ENCODE measurements at regions of chr9 and their contacts with region 1.

Region 1: GRCh38 chr9:97954550-97954989 is 16.6 kb upstream of the HEMGN start:
- DNase-seq: peak; percentile 73
- ATAC-seq: peak; percentile 93
- H3K4me3 Mint-ChIP-seq: no peak overlapping the region
- H3K27ac Mint-ChIP-seq: no peak overlapping the region
- H3K4me1 Mint-ChIP-seq: peaks cover 7% of the 10 kb centered on the region
- H3K27me3 Mint-ChIP-seq: no peaks in the 10 kb centered on the region
- CTCF ChIP-seq: peak; percentile 78

Region 2: GRCh38 chr9:97890038-97890437 is 64.5 kb before region 1 on chr9:
- CTCF ChIA-PET with region 1: interaction called, 11 read pairs
- POLR2A ChIA-PET with region 1: no interaction called
- intact Hi-C with region 1: no loop called
- DNase-seq: peak; percentile 82
- ATAC-seq: peak; percentile 87
- H3K4me3 Mint-ChIP-seq: no peak overlapping the region
- H3K27ac Mint-ChIP-seq: no peak overlapping the region
- H3K4me1 Mint-ChIP-seq: peaks cover 5% of the 10 kb centered on the region
- H3K27me3 Mint-ChIP-seq: no peaks in the 10 kb centered on the region
- CTCF ChIP-seq: peak; percentile 95

Region 3: DNA sequence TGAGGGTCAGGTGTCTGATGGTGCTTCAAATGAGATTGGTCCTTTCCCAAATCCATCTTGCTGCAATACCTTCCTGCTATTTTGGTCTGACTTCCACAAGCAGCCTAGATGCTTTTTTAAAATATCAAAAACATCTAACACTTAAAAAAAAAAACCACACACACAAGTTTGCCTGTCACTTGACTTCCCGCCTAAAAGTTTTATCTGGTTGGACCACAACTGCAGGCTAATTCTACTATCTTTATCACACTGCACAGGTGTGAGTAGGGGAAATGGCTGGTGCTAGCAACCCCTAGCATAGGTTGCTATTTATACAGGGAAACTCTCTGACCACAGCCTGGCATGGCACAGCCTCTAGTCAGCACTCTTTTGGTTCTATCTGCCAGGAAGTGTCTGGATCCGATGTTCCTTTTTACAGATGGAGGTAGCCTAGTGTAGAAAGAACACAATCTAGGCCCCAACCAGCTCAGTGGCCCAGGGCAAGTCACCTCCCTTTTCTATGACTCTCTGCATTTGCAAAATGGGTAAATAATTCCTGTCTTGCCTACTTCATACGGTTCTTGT is 16.4 kb before region 1 on chr9 and contains the start of gene HEMGN:
- CTCF ChIA-PET with region 1: interaction called, 23 read pairs
- POLR2A ChIA-PET with region 1: interaction called, 4 read pairs
- intact Hi-C with region 1: no loop called
- DNase-seq: peak; percentile 53
- ATAC-seq: peak; percentile 81
- H3K4me3 Mint-ChIP-seq: peak within 1 kb of the TSS; percentile 46
- H3K27ac Mint-ChIP-seq: peak within 1 kb of the TSS; percentile 83
- H3K4me1 Mint-ChIP-seq: peaks cover 34% of the 10 kb centered on the region
- H3K27me3 Mint-ChIP-seq: no peaks in the 10 kb centered on the region
- CTCF ChIP-seq: no peak
- total RNA-seq, gene HEMGN: 1.2 to 1.4 TPM

Region 4: DNA sequence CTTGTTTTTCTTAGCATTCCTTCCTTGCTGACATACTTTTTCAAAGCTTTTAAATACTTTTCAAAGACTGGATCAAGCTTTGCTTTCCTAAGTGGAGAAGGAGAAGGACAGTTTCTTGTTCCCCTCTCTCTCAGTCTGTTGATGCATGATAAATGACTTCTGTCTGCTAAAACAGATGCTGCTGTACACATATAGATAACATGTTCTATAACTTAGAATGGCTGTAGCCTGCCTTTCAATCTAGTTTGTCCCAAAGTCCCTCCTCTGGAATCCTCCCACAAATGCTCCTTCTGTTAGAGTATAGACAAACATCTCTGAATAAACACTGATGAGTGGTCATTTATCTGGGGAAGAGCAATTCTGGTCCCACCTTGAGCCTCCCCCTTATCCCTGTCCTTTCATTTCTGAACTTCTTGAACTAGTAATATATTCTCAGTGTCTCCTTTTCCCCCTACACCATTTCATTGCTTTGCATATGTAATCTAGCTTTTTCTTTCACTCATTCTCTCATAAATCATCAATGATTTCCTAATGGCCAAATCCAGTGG is 11.2 kb before region 1 on chr9:
- CTCF ChIA-PET with region 1: interaction called, 23 read pairs
- POLR2A ChIA-PET with region 1: interaction called, 4 read pairs
- intact Hi-C with region 1: no loop called
- DNase-seq: no peak
- ATAC-seq: no peak
- H3K4me3 Mint-ChIP-seq: no peak overlapping the region
- H3K27ac Mint-ChIP-seq: no peak overlapping the region
- H3K4me1 Mint-ChIP-seq: peaks cover 5% of the 10 kb centered on the region
- H3K27me3 Mint-ChIP-seq: no peaks in the 10 kb centered on the region
- CTCF ChIP-seq: no peak

Region 5: DNA sequence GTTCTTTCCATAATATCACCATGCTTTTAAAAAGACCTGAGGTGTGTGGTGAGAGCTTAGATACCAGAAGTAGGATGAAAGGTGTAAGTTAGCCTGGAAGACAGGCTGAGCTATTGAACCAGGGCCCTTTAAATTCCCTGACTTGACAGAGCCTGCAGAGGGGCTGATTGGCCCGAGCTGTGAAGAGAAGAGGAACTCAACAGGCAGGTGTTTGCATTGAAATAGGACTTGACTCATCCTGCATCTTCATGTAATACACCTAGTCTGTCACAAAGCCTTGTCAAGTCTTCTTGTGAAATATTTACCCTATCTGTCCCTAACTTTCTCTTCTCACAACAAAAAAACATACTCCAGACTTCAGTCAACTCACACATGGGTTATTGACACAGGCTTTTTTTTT is 11.9 kb after region 1 on chr9:
- CTCF ChIA-PET with region 1: interaction called, 29 read pairs
- POLR2A ChIA-PET with region 1: no interaction called
- intact Hi-C with region 1: no loop called
- DNase-seq: no peak
- ATAC-seq: no peak
- H3K4me3 Mint-ChIP-seq: no peak overlapping the region
- H3K27ac Mint-ChIP-seq: no peak overlapping the region
- H3K4me1 Mint-ChIP-seq: peaks cover 16% of the 10 kb centered on the region
- H3K27me3 Mint-ChIP-seq: peaks cover 2% of the 10 kb centered on the region
- CTCF ChIP-seq: no peak

Measured in activated CD8-positive, alpha-beta T cell treated with anti-CD3 and anti-CD28 coated beads for 36 hours (primary cell).